Activated CD4-positive, alpha-beta memory T cell treated with anti-CD3 and anti-CD28 coated beads, Interleukin-2, amount 10 ng/mL, durations not matched to agents 7 days and 5 days (primary cell): ENCODE measurements at regions of chr11 and their contacts with region 1.

Region 1: GRCh38 chr11:75142714-75143419 is 8.0 kb upstream of the SLCO2B1 start:
- DNase-seq: peak; percentile 86
- H3K4me3 Mint-ChIP-seq: peak overlapping the region; percentile 45
- H3K27ac Mint-ChIP-seq: peak overlapping the region; percentile 89
- H3K4me1 Mint-ChIP-seq: peaks cover 57% of the 10 kb centered on the region
- H3K27me3 Mint-ChIP-seq: peaks cover 15% of the 10 kb centered on the region

Region 2: GRCh38 chr11:74929431-74930363 is 213.2 kb before region 1 on chr11:
- CTCF ChIA-PET with region 1: interaction called, 58 read pairs
- POLR2A ChIA-PET with region 1: no interaction called
- DNase-seq: peak; percentile 76
- H3K4me3 Mint-ChIP-seq: no peak overlapping the region
- H3K27ac Mint-ChIP-seq: no peak overlapping the region
- H3K4me1 Mint-ChIP-seq: peaks cover 53% of the 10 kb centered on the region
- H3K27me3 Mint-ChIP-seq: no peaks in the 10 kb centered on the region

Region 3: GRCh38 chr11:75126564-75126963 is 16.3 kb before region 1 on chr11:
- CTCF ChIA-PET with region 1: interaction called, 15 read pairs
- POLR2A ChIA-PET with region 1: no interaction called
- DNase-seq: no peak
- H3K4me3 Mint-ChIP-seq: no peak overlapping the region
- H3K27ac Mint-ChIP-seq: no peak overlapping the region
- H3K4me1 Mint-ChIP-seq: no peaks in the 10 kb centered on the region
- H3K27me3 Mint-ChIP-seq: peaks cover 24% of the 10 kb centered on the region

Region 4: GRCh38 chr11:75174781-75175370 is 32.0 kb after region 1 on chr11:
- CTCF ChIA-PET with region 1: interaction called, 36 read pairs
- POLR2A ChIA-PET with region 1: interaction called, 15 read pairs
- DNase-seq: peak; percentile 70
- H3K4me3 Mint-ChIP-seq: peak overlapping the region; percentile 4
- H3K27ac Mint-ChIP-seq: peak overlapping the region; percentile 86
- H3K4me1 Mint-ChIP-seq: peaks cover 28% of the 10 kb centered on the region
- H3K27me3 Mint-ChIP-seq: peaks cover 8% of the 10 kb centered on the region

Region 5: DNA sequence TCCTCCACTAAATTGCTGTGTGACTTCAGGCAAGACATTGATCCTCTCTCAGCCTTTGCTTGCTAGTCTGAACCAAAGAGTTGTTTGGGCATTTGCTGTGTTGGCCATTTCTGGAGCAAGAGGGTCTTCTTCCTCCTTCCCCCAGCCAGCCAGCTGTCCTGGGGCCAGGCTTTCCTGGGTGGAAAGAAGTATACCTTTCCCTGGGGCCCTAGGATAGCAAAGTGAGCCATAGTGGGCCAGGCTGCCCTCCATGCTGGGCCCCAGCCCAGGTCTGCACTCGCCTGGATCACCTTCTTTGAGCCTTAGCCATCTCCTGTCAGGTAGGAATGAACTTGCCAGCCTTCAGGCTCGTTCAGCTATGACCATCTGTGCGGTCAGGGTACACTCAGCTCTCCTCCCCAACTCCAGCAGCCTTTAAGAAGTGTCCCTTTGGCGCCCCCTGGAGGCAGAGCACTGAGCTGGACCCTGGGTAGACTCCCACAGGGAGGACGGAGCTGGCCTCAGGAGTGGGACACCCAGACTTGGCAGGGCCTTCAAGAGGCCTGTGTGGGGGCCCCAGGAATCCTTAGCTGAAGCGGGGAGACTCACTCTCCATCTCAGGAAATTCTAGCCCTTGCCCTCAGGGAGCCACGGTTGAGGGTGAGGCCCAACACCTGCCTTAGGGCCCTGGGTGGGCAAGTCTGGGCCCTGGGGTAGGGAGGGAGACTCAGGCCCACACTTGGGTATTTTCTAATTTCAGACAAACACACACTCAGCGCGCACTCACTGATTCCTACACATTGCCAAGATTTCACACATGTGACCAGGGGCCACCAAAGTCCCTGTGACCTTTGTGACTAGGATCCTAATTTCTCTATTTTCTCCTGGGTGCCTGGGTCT is 62.1 kb after region 1 on chr11:
- CTCF ChIA-PET with region 1: interaction called, 581 read pairs
- POLR2A ChIA-PET with region 1: interaction called, 15 read pairs
- DNase-seq: peak; percentile 87
- H3K4me3 Mint-ChIP-seq: no peak overlapping the region
- H3K27ac Mint-ChIP-seq: no peak overlapping the region
- H3K4me1 Mint-ChIP-seq: no peaks in the 10 kb centered on the region
- H3K27me3 Mint-ChIP-seq: peaks cover 6% of the 10 kb centered on the region

Region 6: DNA sequence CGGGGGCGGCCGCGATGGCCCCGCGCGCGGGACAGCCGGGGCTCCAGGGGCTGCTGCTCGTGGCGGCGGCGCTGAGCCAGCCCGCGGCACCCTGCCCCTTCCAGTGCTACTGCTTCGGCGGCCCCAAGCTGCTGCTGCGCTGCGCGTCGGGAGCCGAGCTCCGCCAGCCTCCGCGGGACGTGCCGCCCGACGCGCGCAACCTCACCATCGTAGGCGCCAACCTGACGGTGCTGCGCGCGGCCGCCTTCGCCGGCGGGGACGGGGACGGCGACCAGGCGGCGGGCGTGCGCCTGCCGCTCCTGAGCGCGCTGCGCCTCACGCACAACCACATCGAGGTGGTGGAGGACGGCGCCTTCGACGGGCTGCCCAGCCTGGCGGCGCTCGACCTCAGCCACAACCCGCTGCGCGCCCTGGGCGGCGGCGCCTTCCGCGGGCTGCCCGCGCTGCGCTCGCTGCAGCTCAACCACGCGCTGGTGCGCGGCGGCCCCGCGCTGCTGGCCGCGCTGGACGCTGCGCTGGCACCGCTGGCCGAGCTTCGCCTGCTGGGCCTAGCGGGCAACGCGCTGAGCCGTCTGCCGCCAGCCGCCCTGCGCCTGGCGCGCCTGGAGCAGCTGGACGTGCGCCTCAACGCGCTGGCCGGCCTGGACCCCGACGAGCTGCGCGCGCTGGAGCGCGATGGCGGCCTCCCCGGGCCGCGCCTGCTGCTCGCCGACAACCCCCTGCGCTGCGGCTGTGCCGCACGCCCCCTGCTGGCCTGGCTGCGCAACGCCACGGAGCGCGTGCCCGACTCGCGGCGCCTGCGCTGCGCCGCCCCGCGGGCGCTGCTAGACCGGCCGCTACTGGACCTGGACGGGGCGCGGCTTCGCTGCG is 98.4 kb after region 1 on chr11:
- CTCF ChIA-PET with region 1: interaction called, 442 read pairs
- POLR2A ChIA-PET with region 1: interaction called, 26 read pairs
- DNase-seq: peak; percentile 89
- H3K4me3 Mint-ChIP-seq: peak overlapping the region; percentile 67
- H3K27ac Mint-ChIP-seq: no peak overlapping the region
- H3K4me1 Mint-ChIP-seq: peaks cover 10% of the 10 kb centered on the region
- H3K27me3 Mint-ChIP-seq: peaks cover 68% of the 10 kb centered on the region

Region 7: DNA sequence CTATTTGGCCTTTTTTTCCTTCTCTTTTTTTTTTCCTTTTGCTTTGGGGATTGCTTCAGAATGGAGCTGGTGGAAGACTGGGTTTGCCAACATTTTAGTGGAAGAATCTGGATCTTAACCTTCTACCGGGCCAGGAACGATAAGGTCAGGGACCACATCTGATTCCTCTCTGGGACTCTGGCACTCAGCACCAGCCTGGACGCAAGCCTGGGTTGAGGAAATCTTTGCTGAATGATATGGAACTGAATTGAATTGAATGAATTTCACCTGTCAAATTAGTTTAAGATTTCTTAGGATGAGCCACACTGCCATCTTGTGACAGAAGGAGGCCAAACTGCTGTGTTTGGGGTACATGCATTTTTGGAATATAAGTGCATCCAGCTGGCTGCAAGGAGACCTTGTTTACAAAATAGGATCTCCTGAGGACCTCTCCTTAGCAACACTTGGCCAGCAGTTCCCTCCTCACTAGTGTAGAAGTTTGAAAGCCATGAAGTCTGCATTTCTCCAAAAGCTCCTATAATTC is 128.1 kb after region 1 on chr11:
- CTCF ChIA-PET with region 1: interaction called, 97 read pairs
- POLR2A ChIA-PET with region 1: interaction called, 4 read pairs
- DNase-seq: peak; percentile 41
- H3K4me3 Mint-ChIP-seq: no peak overlapping the region
- H3K27ac Mint-ChIP-seq: no peak overlapping the region
- H3K4me1 Mint-ChIP-seq: peaks cover 23% of the 10 kb centered on the region
- H3K27me3 Mint-ChIP-seq: no peaks in the 10 kb centered on the region